ENCODE measurements at regions of chr16 and their contacts with region 1.

Region 1: GRCh38 chr16:11051879-11052808 is 107.8 kb downstream of the CLEC16A start:
- DNase-seq: peak; percentile 94
- H3K4me3 Mint-ChIP-seq: peak overlapping the region; percentile 24
- H3K27ac Mint-ChIP-seq: peak overlapping the region; percentile 94
- H3K4me1 Mint-ChIP-seq: peaks cover 64% of the 10 kb centered on the region
- H3K27me3 Mint-ChIP-seq: no peaks in the 10 kb centered on the region

Region 2: GRCh38 chr16:10929853-10930754 is 122.0 kb before region 1 on chr16:
- CTCF ChIA-PET with region 1: no interaction called
- POLR2A ChIA-PET with region 1: no interaction called
- intact Hi-C with region 1: no loop called
- DNase-seq: no peak
- H3K4me3 Mint-ChIP-seq: no peak overlapping the region
- H3K27ac Mint-ChIP-seq: no peak overlapping the region
- H3K4me1 Mint-ChIP-seq: peaks cover 14% of the 10 kb centered on the region
- H3K27me3 Mint-ChIP-seq: no peaks in the 10 kb centered on the region

Region 3: GRCh38 chr16:11025120-11025531 is 27.0 kb before region 1 on chr16:
- CTCF ChIA-PET with region 1: interaction called, 3 read pairs
- POLR2A ChIA-PET with region 1: interaction called, 15 read pairs
- intact Hi-C with region 1: loop called (anchors 1 kb)
- DNase-seq: peak; percentile 24
- H3K4me3 Mint-ChIP-seq: no peak overlapping the region
- H3K27ac Mint-ChIP-seq: peak overlapping the region; percentile 91
- H3K4me1 Mint-ChIP-seq: peaks cover 22% of the 10 kb centered on the region
- H3K27me3 Mint-ChIP-seq: no peaks in the 10 kb centered on the region

Region 4: GRCh38 chr16:11076259-11077018 is 24.3 kb after region 1 on chr16:
- CTCF ChIA-PET with region 1: no interaction called
- POLR2A ChIA-PET with region 1: interaction called, 9 read pairs
- intact Hi-C with region 1: loop called (anchors 1 kb)
- DNase-seq: peak; percentile 88
- H3K4me3 Mint-ChIP-seq: no peak overlapping the region
- H3K27ac Mint-ChIP-seq: peak overlapping the region; percentile 94
- H3K4me1 Mint-ChIP-seq: peaks cover 96% of the 10 kb centered on the region
- H3K27me3 Mint-ChIP-seq: no peaks in the 10 kb centered on the region

Region 5: DNA sequence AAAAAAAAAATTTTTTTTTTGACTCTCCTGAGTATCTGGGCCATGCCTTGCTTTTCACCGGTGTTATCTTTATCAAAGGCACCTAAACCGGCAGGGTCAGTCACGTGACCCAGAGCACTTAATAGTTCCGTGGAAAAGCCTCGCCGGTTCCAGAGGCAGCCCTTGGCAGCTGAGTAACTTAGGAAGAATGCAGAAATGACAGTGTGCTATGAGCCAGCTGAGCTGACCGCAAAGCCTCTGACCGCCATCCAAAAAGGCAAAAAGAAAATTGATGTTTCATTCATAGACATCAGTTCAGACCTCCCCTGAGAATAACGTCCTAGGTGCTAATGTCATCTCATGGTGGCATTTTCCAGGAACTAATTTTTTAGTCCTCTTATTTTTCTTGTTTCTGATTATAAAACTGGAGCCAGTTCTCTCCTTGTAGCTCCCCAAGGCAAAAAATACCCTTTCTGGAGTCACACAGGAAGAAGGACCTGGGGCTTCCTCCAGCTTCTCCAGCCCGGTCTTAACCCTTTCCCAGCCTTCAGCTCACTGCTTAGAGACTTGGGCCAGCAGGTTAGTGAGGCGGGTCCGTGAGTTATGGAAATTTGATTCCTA is 81.3 kb after region 1 on chr16:
- CTCF ChIA-PET with region 1: no interaction called
- POLR2A ChIA-PET with region 1: no interaction called
- intact Hi-C with region 1: no loop called
- DNase-seq: no peak
- H3K4me3 Mint-ChIP-seq: no peak overlapping the region
- H3K27ac Mint-ChIP-seq: no peak overlapping the region
- H3K4me1 Mint-ChIP-seq: peaks cover 46% of the 10 kb centered on the region
- H3K27me3 Mint-ChIP-seq: no peaks in the 10 kb centered on the region

Region 6: GRCh38 chr16:11164482-11165270 is 112.5 kb after region 1 on chr16:
- CTCF ChIA-PET with region 1: interaction called, 6 read pairs
- POLR2A ChIA-PET with region 1: interaction called, 7 read pairs
- intact Hi-C with region 1: loop called (anchors 1 kb)
- DNase-seq: no peak
- H3K4me3 Mint-ChIP-seq: no peak overlapping the region
- H3K27ac Mint-ChIP-seq: peak overlapping the region; percentile 24
- H3K4me1 Mint-ChIP-seq: peaks cover 26% of the 10 kb centered on the region
- H3K27me3 Mint-ChIP-seq: no peaks in the 10 kb centered on the region

Region 7: DNA sequence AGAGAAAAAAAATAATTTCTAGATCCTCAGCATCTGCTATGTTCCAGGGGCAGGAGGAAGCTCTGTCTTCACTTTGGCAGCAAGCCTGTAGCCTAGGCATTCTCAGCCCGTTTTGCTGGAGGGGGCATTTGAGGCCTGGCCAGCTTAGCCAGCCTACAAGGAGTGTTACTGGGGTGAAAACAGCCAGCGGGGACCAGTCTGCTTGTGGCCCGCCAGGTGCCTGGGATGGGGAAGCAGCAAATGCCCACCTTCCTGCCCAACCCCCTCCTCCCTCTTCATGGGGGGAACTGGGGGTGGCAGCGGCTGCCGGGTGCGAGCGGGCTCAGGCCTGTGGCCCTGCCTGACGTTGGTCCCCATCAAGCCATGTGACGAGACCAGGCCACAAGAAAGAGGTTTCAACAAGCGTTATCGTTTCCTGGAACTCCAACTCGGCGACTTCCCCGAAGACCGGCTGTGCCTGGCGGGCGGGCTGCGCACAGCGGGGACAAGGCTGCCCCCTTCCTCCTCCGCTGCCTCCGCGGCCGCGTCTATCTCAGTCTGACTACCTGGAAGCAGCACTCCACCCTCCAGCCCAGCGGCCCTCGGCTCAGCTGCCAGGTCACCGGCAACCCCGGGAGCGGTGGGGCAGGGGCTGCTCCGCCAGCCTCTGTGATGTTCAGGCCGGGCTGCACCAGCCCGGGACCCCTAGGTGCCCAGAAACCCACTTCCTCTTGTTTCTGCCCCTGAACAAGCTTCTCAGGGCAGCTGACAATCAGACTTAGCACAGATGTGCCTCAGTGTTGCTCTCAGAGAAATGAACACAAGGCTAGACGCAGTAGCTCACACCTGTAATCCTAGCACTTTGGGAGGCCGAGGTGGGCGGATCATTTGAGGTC is 180.9 kb after region 1 on chr16:
- CTCF ChIA-PET with region 1: interaction called, 4 read pairs
- POLR2A ChIA-PET with region 1: interaction called, 8 read pairs
- intact Hi-C with region 1: loop called (anchors 1 kb)
- DNase-seq: peak; percentile 97
- H3K4me3 Mint-ChIP-seq: peak overlapping the region; percentile 62
- H3K27ac Mint-ChIP-seq: peak overlapping the region; percentile 99
- H3K4me1 Mint-ChIP-seq: peaks cover 74% of the 10 kb centered on the region
- H3K27me3 Mint-ChIP-seq: no peaks in the 10 kb centered on the region

Measured in activated CD4-positive, alpha-beta memory T cell treated with anti-CD3 and anti-CD28 coated beads for 36 hours (primary cell).